Activated CD8-positive, alpha-beta T cell treated with anti-CD3 and anti-CD28 coated beads for 36 hours (primary cell): ENCODE measurements at regions of chr11 and their contacts with region 1.

Region 1: GRCh38 chr11:75689863-75690609 is 21.2 kb upstream of the MAP6 start:
- DNase-seq: peak; percentile 43
- ATAC-seq: peak; percentile 85
- H3K4me3 Mint-ChIP-seq: peak overlapping the region; percentile 13
- H3K27ac Mint-ChIP-seq: peak overlapping the region; percentile 73
- H3K4me1 Mint-ChIP-seq: peaks cover 18% of the 10 kb centered on the region
- H3K27me3 Mint-ChIP-seq: peaks cover 52% of the 10 kb centered on the region
- CTCF ChIP-seq: no peak

Region 2: DNA sequence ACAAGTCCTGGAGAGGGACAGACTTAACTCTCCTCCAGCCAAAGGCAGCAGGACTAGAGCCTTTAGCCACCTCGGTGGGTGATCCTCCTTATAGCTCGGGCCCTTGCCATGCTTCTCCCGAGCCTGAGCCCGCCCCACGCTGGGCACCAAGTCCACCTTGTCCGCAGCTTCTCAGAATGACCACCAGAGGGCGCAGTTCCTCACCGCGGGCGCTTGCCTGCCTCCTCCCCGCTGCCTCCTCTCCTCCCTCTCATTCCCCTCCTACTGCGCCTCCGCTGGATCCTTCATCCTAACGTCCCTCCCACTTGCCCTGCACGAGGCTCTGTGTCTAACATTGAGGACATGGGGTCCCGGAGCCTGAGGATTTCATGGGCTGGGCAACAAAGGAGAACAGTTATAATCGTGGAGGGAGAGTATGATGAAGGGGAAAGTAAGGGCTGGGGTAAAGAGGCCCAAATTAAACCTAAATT is 16.3 kb after region 1 on chr11:
- CTCF ChIA-PET with region 1: interaction called, 13 read pairs
- POLR2A ChIA-PET with region 1: no interaction called
- intact Hi-C with region 1: no loop called
- DNase-seq: peak; percentile 65
- ATAC-seq: peak; percentile 98
- H3K4me3 Mint-ChIP-seq: no peak overlapping the region
- H3K27ac Mint-ChIP-seq: no peak overlapping the region
- H3K4me1 Mint-ChIP-seq: no peaks in the 10 kb centered on the region
- H3K27me3 Mint-ChIP-seq: peaks cover 3% of the 10 kb centered on the region
- CTCF ChIP-seq: peak; percentile 94

Region 3: GRCh38 chr11:75878933-75879332 is 188.9 kb after region 1 on chr11:
- CTCF ChIA-PET with region 1: no interaction called
- POLR2A ChIA-PET with region 1: no interaction called
- intact Hi-C with region 1: no loop called
- DNase-seq: no peak
- ATAC-seq: no peak
- H3K4me3 Mint-ChIP-seq: no peak overlapping the region
- H3K27ac Mint-ChIP-seq: no peak overlapping the region
- H3K4me1 Mint-ChIP-seq: peaks cover 6% of the 10 kb centered on the region
- H3K27me3 Mint-ChIP-seq: no peaks in the 10 kb centered on the region
- CTCF ChIP-seq: no peak